ENCODE measurements at regions of chr6 and their contacts with region 1.

Region 1: GRCh38 chr6:79777713-79778579 is 146.8 kb downstream of the SH3BGRL2 start:
- DNase-seq: peak; percentile 71 to 94
- ATAC-seq: peak; percentile 86 to 98 (median 96)
- H3K4me3 ChIP-seq: no peak overlapping the region
- H3K4me3 Mint-ChIP-seq: peak overlapping the region; percentile 59
- H3K27ac ChIP-seq: no peak overlapping the region
- H3K27ac Mint-ChIP-seq: peak overlapping the region in 1 of 2 donors; percentile 7
- H3K4me1 ChIP-seq: peaks cover 7% of the 10 kb centered on the region
- H3K4me1 Mint-ChIP-seq: peaks cover 6 to 11% of the 10 kb centered on the region in 2 donors
- H3K27me3 ChIP-seq: no peaks in the 10 kb centered on the region
- H3K27me3 Mint-ChIP-seq: peaks cover 10 to 14% of the 10 kb centered on the region in 2 donors
- CTCF ChIP-seq: peak; percentile 95

Region 2: GRCh38 chr6:79868098-79868722 is 90.3 kb after region 1 on chr6:
- intact Hi-C with region 1: loop called (anchors 1 kb)
- DNase-seq: peak in 1 of 2 donors; percentile 74
- ATAC-seq: peak in 1 of 3 donors; percentile 27
- H3K4me3 ChIP-seq: no peak overlapping the region
- H3K4me3 Mint-ChIP-seq: no peak overlapping the region
- H3K27ac ChIP-seq: no peak overlapping the region
- H3K27ac Mint-ChIP-seq: no peak overlapping the region
- H3K4me1 ChIP-seq: no peaks in the 10 kb centered on the region
- H3K4me1 Mint-ChIP-seq: peaks cover 19 to 20% of the 10 kb centered on the region in 2 donors
- H3K27me3 ChIP-seq: no peaks in the 10 kb centered on the region
- H3K27me3 Mint-ChIP-seq: peaks cover 11 to 37% of the 10 kb centered on the region in 2 donors
- CTCF ChIP-seq: peak; percentile 47

Region 3: GRCh38 chr6:80094017-80094416 is 316.1 kb after region 1 on chr6:
- intact Hi-C with region 1: loop called (anchors 5 kb)
- DNase-seq: peak in 1 of 2 donors; percentile 57
- ATAC-seq: peak in 2 of 3 donors; percentile 65 to 70
- H3K4me3 ChIP-seq: no peak overlapping the region
- H3K4me3 Mint-ChIP-seq: no peak overlapping the region
- H3K27ac ChIP-seq: no peak overlapping the region
- H3K27ac Mint-ChIP-seq: no peak overlapping the region
- H3K4me1 ChIP-seq: no peaks in the 10 kb centered on the region
- H3K4me1 Mint-ChIP-seq: no peaks in the 10 kb centered on the region
- H3K27me3 ChIP-seq: no peaks in the 10 kb centered on the region
- H3K27me3 Mint-ChIP-seq: peaks cover 18 to 19% of the 10 kb centered on the region in 2 donors
- CTCF ChIP-seq: peak; percentile 76

Measured in natural killer cell (primary cell).